ENCODE measurements at regions of chr10 and their contacts with region 1.

Region 1: DNA sequence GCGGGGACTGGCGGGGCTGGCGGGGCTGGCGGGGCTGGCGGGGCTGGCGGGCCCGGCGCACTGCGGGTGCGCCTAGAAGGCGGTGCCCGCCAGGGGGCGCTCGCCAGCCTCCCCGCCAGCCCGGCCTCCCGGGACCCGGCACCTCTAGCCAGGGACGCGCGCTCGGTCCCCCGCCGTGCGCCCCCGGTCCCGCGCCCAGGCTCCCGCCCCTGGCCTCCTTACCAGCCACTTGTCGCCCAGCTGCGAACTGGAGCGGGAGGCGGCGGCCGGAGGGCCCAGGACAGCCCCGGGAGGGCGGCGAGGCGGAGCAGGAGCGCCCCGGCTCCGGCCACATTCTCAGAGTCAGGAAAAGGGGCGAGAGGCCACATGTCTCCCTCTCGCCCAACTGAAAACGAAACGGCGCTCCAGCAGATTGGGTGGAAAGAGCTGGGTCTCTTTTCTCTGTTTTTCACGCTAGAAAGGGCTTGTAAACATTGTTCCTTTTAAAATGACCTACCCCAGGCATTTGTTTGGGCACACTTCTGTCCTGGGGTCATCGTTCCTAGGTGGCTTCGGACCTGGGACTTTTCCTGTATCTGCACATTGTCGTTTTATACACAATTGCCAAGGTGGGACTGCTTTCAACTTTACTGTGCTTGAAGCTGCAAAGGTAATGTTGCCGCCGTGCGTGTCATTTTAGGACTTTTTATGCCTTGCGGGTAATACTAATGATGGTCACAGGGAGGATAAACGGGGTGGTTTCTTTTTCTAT is 378 bp upstream of the PRKCQ start:
- DNase-seq: peak; percentile 84 to 92 (median 90)
- ATAC-seq: peak; percentile 86
- H3K4me3 ChIP-seq: peak overlapping the region; percentile 84
- H3K27ac ChIP-seq: peak overlapping the region; percentile 86
- H3K4me1 ChIP-seq: peaks cover 18 to 26% of the 10 kb centered on the region in 2 experiments
- H3K27me3 ChIP-seq: no peaks in the 10 kb centered on the region
- CTCF ChIP-seq: peak in 2 of 3 experiments; percentile 57 to 74; a peak in 4 of 6 replicates
- EP300 ChIP-seq: no peak
- POLR2A ChIP-seq: peak; percentile 90
- RAD21 ChIP-seq: peak; percentile 29 to 43

Region 2: DNA sequence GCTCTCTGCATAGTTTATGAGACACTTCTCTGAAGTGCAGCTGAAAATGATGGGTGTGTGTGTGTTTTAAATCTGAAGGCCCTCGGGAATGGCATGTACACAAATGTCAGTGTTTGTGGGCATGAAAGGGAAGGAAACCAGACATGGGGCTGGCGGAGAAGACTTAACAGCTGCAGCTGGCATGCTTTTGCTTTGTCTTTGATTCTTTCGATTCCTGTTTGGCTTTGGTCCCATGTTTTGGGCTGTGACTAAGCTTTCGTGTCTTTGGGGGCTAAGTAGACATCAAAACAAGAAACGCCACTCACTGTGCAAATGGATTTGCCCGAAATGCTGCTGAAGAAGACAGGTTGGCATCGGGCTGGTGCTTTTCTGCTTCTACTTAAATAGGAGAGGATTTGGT is 198.4 kb before region 1 on chr10:
- CTCF ChIA-PET with region 1: no interaction called
- POLR2A ChIA-PET with region 1: no interaction called
- in situ Hi-C with region 1: no loop called
- intact Hi-C with region 1: no loop called
- DNase-seq: no peak
- ATAC-seq: no peak
- H3K4me3 ChIP-seq: no peak overlapping the region
- H3K27ac ChIP-seq: no peak overlapping the region
- H3K4me1 ChIP-seq: no peaks in the 10 kb centered on the region
- H3K27me3 ChIP-seq: peaks cover 10 to 32% of the 10 kb centered on the region in 2 experiments; a peak in 4 of 5 replicates
- CTCF ChIP-seq: no peak
- EP300 ChIP-seq: no peak
- POLR2A ChIP-seq: no peak
- RAD21 ChIP-seq: no peak

Region 3: GRCh38 chr10:6445501-6446316 is 134.7 kb before region 1 on chr10:
- CTCF ChIA-PET with region 1: no interaction called
- POLR2A ChIA-PET with region 1: no interaction called
- in situ Hi-C with region 1: no loop called
- intact Hi-C with region 1: loop called (anchors 5 kb)
- DNase-seq: peak; percentile 54 to 76 (median 58)
- ATAC-seq: peak; percentile 91
- H3K4me3 ChIP-seq: no peak overlapping the region
- H3K27ac ChIP-seq: peak overlapping the region; percentile 61; the same call in 2 of the 3 replicates
- H3K4me1 ChIP-seq: peaks cover 0 to 4% of the 10 kb centered on the region in 2 experiments; a peak in 2 of 5 replicates
- H3K27me3 ChIP-seq: no peaks in the 10 kb centered on the region
- CTCF ChIP-seq: peak; percentile 74 to 84 (median 81)
- EP300 ChIP-seq: no peak
- POLR2A ChIP-seq: no peak
- RAD21 ChIP-seq: peak; percentile 76 to 89

Region 4: GRCh38 chr10:6473901-6474370 is 106.5 kb before region 1 on chr10:
- CTCF ChIA-PET with region 1: no interaction called
- POLR2A ChIA-PET with region 1: interaction called, 3 read pairs
- in situ Hi-C with region 1: no loop called
- intact Hi-C with region 1: loop called (anchors 5 kb)
- DNase-seq: peak in 2 of 4 experiments; percentile 21 to 45
- ATAC-seq: peak; percentile 42
- H3K4me3 ChIP-seq: no peak overlapping the region
- H3K27ac ChIP-seq: peak overlapping the region; percentile 95
- H3K4me1 ChIP-seq: peaks cover 12 to 44% of the 10 kb centered on the region in 2 experiments
- H3K27me3 ChIP-seq: no peaks in the 10 kb centered on the region
- CTCF ChIP-seq: no peak
- EP300 ChIP-seq: no peak
- POLR2A ChIP-seq: no peak
- RAD21 ChIP-seq: no peak

Region 5: GRCh38 chr10:6514844-6515780 is 65.3 kb before region 1 on chr10:
- CTCF ChIA-PET with region 1: no interaction called
- POLR2A ChIA-PET with region 1: no interaction called
- in situ Hi-C with region 1: no loop called
- intact Hi-C with region 1: loop called (anchors 2 kb)
- DNase-seq: peak in 2 of 4 experiments; percentile 56 to 66
- ATAC-seq: peak; percentile 85
- H3K4me3 ChIP-seq: no peak overlapping the region
- H3K27ac ChIP-seq: peak overlapping the region; percentile 70
- H3K4me1 ChIP-seq: peaks cover 0 to 21% of the 10 kb centered on the region in 2 experiments; a peak in 4 of 5 replicates
- H3K27me3 ChIP-seq: no peaks in the 10 kb centered on the region; a peak in 1 of 5 replicates
- CTCF ChIP-seq: no peak
- EP300 ChIP-seq: peak; percentile 6; the same call in 1 of the 2 replicates
- POLR2A ChIP-seq: no peak
- RAD21 ChIP-seq: no peak; a peak in 1 of 4 replicates

Region 6: GRCh38 chr10:6659471-6659870 is 79.0 kb after region 1 on chr10:
- CTCF ChIA-PET with region 1: no interaction called
- POLR2A ChIA-PET with region 1: no interaction called
- in situ Hi-C with region 1: no loop called
- intact Hi-C with region 1: no loop called
- DNase-seq: no peak
- ATAC-seq: no peak
- H3K4me3 ChIP-seq: no peak overlapping the region
- H3K27ac ChIP-seq: no peak overlapping the region
- H3K4me1 ChIP-seq: no peaks in the 10 kb centered on the region
- H3K27me3 ChIP-seq: peaks cover 2 to 14% of the 10 kb centered on the region in 2 experiments; a peak in 2 of 5 replicates
- CTCF ChIP-seq: no peak
- EP300 ChIP-seq: no peak
- POLR2A ChIP-seq: no peak
- RAD21 ChIP-seq: no peak

Region 7: GRCh38 chr10:6770846-6771245 is 190.4 kb after region 1 on chr10:
- CTCF ChIA-PET with region 1: no interaction called
- POLR2A ChIA-PET with region 1: no interaction called
- in situ Hi-C with region 1: no loop called
- intact Hi-C with region 1: no loop called
- DNase-seq: no peak
- ATAC-seq: no peak; the same call in 2 of the 3 replicates
- H3K4me3 ChIP-seq: no peak overlapping the region
- H3K27ac ChIP-seq: no peak overlapping the region
- H3K4me1 ChIP-seq: no peaks in the 10 kb centered on the region
- H3K27me3 ChIP-seq: peaks cover 0 to 11% of the 10 kb centered on the region in 2 experiments; a peak in 3 of 5 replicates
- CTCF ChIP-seq: no peak
- EP300 ChIP-seq: no peak
- POLR2A ChIP-seq: no peak
- RAD21 ChIP-seq: no peak

Region 8: DNA sequence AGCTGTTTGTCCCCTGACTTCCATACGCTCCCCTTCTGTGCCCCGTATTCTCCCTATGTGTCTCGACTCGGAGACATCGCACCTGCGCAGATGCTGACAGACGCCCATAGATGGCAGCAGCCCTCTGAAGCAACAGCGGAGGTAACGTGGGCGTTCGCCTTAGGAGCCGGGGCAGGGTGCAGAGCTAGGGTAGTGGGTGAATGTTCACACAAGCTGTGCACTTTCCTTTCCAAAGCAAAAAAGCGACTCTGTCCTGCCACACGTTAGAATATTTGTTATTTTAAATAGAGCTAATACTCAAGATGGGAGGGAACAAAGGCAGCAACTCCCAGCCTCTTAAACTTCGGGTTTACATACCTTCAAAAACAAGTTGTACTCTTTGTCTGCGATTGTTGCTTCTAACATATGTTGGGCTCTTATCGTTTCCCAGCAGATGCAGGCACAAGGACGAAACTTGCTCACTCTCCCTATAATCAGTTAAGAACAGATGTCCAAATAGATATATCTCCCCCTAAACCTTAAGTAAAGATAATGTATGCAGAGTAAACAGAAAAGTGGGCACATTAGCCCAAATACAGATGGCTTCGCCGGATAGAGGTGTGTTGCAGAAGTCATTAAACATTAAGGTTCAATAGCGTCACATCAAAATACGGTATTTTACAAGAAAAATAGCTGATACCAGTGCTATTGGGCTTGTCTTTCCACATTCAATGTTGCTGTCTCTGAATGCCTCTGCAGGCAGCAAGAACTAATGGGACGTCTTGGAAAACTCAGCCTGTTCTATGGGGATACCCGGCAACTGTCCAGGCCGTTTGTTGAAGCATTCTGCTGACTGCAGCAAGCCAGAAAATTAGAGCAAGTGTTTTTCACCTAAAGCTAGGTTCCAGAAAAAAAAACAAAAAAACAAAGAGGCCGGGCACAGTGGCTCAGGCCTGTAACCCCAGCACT is 339.9 kb after region 1 on chr10:
- CTCF ChIA-PET with region 1: no interaction called
- POLR2A ChIA-PET with region 1: no interaction called
- in situ Hi-C with region 1: no loop called
- intact Hi-C with region 1: no loop called
- DNase-seq: peak; percentile 87 to 92 (median 88)
- ATAC-seq: peak; percentile 95
- H3K4me3 ChIP-seq: peak overlapping the region; percentile 5; the same call in 1 of the 2 replicates
- H3K27ac ChIP-seq: peak overlapping the region; percentile 75
- H3K4me1 ChIP-seq: peaks cover 2 to 17% of the 10 kb centered on the region in 2 experiments; a peak in 4 of 5 replicates
- H3K27me3 ChIP-seq: no peaks in the 10 kb centered on the region; a peak in 1 of 5 replicates
- CTCF ChIP-seq: peak; percentile 79 to 92 (median 84)
- EP300 ChIP-seq: peak; percentile 99
- POLR2A ChIP-seq: no peak
- RAD21 ChIP-seq: peak; percentile 86 to 88

Measured in K562 (cell line).